Esophagus squamous epithelium (tissue), 5 donors: ENCODE measurements at regions of chr6 and their contacts with region 1.

Region 1: DNA sequence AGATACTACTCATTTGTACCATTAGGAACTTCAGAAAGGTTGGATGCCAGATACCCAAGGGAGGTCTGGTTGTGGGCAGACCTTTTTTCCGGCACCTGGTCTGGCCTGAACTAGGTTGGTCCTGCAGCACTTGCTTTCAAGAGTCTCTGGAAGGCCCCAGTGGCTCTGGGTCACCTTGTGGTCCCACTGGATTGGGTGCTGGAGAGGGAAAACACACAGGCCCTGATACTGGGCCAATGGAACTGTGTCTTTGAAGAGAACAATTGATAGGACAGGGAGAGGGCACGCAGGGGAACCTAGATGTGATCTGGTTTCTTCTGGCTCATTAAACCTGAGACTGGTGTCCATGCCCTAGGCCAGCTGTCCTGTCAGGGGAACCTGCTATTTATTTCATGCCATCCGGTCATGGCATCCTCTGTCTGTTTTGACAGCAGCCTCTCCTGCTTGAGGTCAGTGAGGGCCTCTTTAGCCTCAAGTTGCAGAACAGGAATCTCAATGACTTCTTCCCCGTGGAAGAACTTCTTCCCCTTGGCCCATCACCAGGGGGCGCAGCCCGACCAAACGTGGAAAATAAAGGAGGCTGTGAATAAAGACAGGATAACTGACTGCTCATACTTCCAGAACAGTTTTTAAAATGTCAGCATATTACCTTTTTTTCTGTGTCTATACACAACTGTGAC is 25.0 kb downstream of the TAF8 start:
- DNase-seq: no peak
- H3K4me3 ChIP-seq: no peak overlapping the region
- H3K27ac ChIP-seq: no peak overlapping the region
- H3K4me1 ChIP-seq: peaks cover 0 to 9% (median 0%) of the 10 kb centered on the region in 3 donors
- H3K27me3 ChIP-seq: no peaks in the 10 kb centered on the region
- CTCF ChIP-seq: peak; percentile 59 to 92 (median 86)
- POLR2A ChIP-seq: no peak

Region 2: DNA sequence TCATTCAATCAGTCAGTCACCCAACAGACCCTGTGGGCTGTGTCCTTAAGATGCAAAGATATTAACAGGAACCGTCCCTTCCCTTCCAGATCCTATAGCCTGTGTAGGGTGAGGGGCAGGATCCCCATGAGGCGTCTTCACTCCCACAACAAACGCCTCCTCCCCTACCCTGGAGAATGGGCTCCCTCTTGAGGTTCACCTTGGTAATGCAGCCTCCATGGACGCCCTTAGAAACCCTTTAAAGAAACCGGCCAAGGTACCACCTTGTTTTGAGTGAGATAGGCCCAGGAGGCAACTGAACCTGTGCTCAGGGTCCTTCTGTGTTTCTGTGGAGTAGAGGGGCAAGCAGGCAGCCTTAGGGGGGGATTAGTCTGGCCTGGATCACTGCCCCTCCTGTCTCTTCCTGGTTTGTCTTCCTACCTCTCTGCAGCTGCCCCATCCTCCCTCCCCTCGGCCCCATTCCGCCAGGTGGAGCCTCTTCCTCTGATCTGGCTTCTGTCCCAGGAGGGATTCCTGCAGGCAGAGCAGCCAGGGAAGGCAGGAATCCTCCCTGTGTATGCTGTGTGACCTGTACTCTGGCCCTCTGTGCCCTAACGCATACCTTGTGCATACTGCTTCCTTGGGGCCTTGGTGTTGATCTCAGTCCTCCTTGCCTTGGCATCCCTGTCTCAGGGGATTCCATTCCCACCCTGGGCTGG is 91.3 kb after region 1 on chr6:
- intact Hi-C with region 1: loop called (anchors 2 kb)
- DNase-seq: no peak
- H3K4me3 ChIP-seq: no peak overlapping the region
- H3K27ac ChIP-seq: peak overlapping the region in 2 of 4 donors; percentile 39 to 44
- H3K4me1 ChIP-seq: peaks cover 0 to 17% (median 0%) of the 10 kb centered on the region in 3 donors
- H3K27me3 ChIP-seq: no peaks in the 10 kb centered on the region
- CTCF ChIP-seq: peak; percentile 82 to 97 (median 96)
- POLR2A ChIP-seq: no peak

Region 3: DNA sequence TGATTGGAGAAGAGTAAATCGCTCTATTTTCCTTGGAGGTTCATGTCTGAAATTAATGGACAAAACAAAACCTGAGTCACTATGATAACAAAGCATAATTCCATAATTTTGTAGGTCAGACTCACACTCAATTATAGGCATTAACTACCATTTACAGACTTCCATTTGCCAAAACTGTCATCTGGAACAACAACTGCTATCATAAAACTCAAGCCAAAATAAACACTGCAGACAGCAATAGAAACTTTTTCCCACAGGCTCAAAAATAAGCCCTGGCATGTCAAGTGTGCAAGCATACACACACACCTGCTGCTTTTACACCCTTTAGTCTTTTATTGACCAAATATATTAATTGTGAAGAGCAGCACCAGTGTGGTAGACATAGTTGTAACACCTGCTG is 135.3 kb after region 1 on chr6:
- intact Hi-C with region 1: no loop called
- DNase-seq: no peak
- H3K4me3 ChIP-seq: no peak overlapping the region
- H3K27ac ChIP-seq: no peak overlapping the region
- H3K4me1 ChIP-seq: peaks cover 0 to 52% (median 22%) of the 10 kb centered on the region in 3 donors
- H3K27me3 ChIP-seq: no peaks in the 10 kb centered on the region
- CTCF ChIP-seq: no peak
- POLR2A ChIP-seq: no peak

Region 4: DNA sequence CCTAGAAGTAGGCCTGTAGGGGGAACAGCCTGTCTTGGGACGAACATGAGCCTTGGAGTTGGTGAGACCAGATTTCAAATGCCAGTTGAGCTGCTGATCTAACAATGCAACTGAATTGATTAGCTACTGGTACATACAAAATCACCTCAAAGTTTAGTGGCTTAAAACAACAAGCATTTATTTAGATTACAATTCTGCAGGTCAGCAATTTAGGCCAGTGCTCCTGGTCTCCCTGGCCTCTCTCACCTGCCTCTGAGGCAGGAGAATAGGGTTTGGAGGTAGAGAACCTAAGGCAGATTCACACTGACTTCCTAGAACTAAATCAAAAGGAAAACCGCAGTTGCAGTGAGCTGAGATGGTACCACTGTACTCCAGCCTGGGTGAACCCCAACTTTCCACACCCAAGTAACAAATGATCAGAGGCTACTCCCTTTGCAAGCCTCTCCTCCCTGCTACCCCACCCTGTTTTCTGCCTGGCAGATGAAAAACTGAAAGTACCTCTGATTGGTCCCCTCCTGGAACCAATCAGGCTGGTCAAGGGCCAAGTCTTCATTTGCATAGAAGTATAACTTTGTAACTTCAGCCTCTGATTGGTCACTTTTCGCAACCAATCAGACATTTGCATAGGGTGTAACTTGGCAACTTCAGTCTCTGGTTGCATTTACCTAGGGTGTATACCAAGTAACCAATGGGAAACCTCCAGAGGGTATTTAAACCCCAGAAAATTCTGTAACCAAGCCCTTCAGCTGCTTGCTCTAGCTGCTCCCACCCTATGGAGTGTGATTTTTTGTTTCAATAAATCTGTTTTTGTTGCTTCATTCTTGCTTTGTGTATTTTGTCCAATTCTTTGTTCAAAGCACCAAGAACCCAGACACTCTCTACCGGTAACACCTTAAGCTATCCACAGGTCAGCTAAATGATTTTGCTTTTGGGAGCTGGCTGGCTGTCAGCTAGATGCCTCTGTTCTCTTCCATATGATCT is 480.5 kb after region 1 on chr6:
- intact Hi-C with region 1: loop called (anchors 10 kb)
- DNase-seq: no peak
- H3K4me3 ChIP-seq: no peak overlapping the region
- H3K27ac ChIP-seq: no peak overlapping the region
- H3K4me1 ChIP-seq: peaks cover 0 to 5% (median 0%) of the 10 kb centered on the region in 3 donors
- H3K27me3 ChIP-seq: no peaks in the 10 kb centered on the region
- CTCF ChIP-seq: no peak
- POLR2A ChIP-seq: no peak